ENCODE measurements at regions of chrX and their contacts with region 1.

Region 1: DNA sequence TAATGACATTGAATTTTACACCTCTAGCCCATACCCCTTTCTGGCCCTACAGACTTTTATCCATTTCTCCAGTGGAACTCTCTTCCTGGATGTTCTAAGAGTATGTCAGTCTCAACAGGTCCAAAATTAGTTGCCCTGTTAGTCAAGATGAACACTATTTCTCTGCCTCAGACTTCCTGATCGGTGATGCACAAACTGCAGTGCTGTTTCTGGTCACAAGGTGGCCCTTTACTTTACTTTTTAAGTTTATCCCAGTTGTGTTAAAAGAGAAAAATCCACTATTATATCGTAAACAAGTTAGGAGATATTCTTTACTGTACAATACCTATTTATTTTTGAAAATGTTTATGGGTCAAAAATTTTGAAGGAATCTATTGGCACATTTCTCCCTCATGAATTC is 13.1 kb downstream of the TCEAL7 start:
- DNase-seq: peak in 1 of 4 donors; percentile 38
- ATAC-seq: peak; percentile 77
- H3K4me3 ChIP-seq: no peak overlapping the region
- H3K27ac ChIP-seq: no peak overlapping the region
- H3K4me1 ChIP-seq: no peaks in the 10 kb centered on the region
- H3K27me3 ChIP-seq: peaks cover 0 to 13% of the 10 kb centered on the region in 2 donors
- CTCF ChIP-seq: peak; percentile 50 to 60

Region 2: DNA sequence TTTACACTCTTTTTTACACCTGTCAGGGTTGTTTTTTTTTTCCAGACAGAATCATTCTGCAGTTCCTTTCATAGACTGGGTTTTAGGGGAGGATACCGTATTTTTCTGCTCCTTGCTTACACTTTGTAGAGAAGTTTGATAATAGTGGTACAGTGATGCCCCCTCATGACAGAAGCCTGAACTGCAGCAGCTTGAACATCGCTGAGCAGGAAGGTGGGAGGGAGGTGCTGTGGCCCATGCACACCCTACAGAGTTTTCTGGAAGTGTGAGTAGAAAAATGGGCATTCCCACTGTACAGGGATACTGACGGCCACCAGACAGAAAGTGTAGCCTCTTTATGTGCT is 121.6 kb after region 1 on chrX:
- intact Hi-C with region 1: loop called in 1 of 2 experiments (anchors 5 kb)
- DNase-seq: peak in 3 of 4 donors; percentile 39 to 79 (median 67)
- ATAC-seq: peak; percentile 99
- H3K4me3 ChIP-seq: peak overlapping the region in 1 of 2 donors; percentile 3
- H3K27ac ChIP-seq: no peak overlapping the region
- H3K4me1 ChIP-seq: no peaks in the 10 kb centered on the region
- H3K27me3 ChIP-seq: no peaks in the 10 kb centered on the region
- CTCF ChIP-seq: peak; percentile 68 to 75

Measured in left lung (tissue), 14 donors.